Head of caudate nucleus (tissue), 42 donors: ENCODE measurements at regions of chr12 and their contacts with region 1.

Region 1: GRCh38 chr12:119412811-119413794 is 78.6 kb downstream of the CCDC60 start:
- DNase-seq: peak in 41 of 42 donors; percentile 24 to 89 (median 73)

Region 2: GRCh38 chr12:119115296-119115905 is 297.7 kb before region 1 on chr12:
- intact Hi-C with region 1: loop called (anchors 10 kb)
- DNase-seq: peak in 31 of 42 donors; percentile 4 to 80 (median 43)